B cell (primary cell): ENCODE measurements at regions of chr2 and their contacts with region 1.

Region 1: GRCh38 chr2:218852911-218853667 is 6.5 kb upstream of the WNT6 start:
- DNase-seq: peak; percentile 81
- ATAC-seq: peak; percentile 87
- H3K4me3 ChIP-seq: no peak overlapping the region
- H3K4me3 Mint-ChIP-seq: no peak overlapping the region
- H3K27ac ChIP-seq: no peak overlapping the region
- H3K27ac Mint-ChIP-seq: no peak overlapping the region
- H3K4me1 ChIP-seq: peaks cover 3% of the 10 kb centered on the region in 2 donors
- H3K4me1 Mint-ChIP-seq: no peaks in the 10 kb centered on the region
- H3K27me3 ChIP-seq: peaks cover 0 to 72% (median 27%) of the 10 kb centered on the region in 4 experiments
- H3K27me3 Mint-ChIP-seq: peaks cover 61% of the 10 kb centered on the region
- CTCF ChIP-seq: peak; percentile 82

Region 2: GRCh38 chr2:218301176-218301819 is 551.8 kb before region 1 on chr2:
- CTCF ChIA-PET with region 1: no interaction called
- POLR2A ChIA-PET with region 1: no interaction called
- intact Hi-C with region 1: loop called (anchors 5 kb)
- DNase-seq: peak; percentile 90
- ATAC-seq: peak; percentile 94
- H3K4me3 ChIP-seq: no peak overlapping the region
- H3K4me3 Mint-ChIP-seq: no peak overlapping the region
- H3K27ac ChIP-seq: no peak overlapping the region
- H3K27ac Mint-ChIP-seq: no peak overlapping the region
- H3K4me1 ChIP-seq: peaks cover 3 to 6% of the 10 kb centered on the region in 2 donors
- H3K4me1 Mint-ChIP-seq: peaks cover 7% of the 10 kb centered on the region
- H3K27me3 ChIP-seq: no peaks in the 10 kb centered on the region
- H3K27me3 Mint-ChIP-seq: no peaks in the 10 kb centered on the region
- CTCF ChIP-seq: peak; percentile 90

Region 3: DNA sequence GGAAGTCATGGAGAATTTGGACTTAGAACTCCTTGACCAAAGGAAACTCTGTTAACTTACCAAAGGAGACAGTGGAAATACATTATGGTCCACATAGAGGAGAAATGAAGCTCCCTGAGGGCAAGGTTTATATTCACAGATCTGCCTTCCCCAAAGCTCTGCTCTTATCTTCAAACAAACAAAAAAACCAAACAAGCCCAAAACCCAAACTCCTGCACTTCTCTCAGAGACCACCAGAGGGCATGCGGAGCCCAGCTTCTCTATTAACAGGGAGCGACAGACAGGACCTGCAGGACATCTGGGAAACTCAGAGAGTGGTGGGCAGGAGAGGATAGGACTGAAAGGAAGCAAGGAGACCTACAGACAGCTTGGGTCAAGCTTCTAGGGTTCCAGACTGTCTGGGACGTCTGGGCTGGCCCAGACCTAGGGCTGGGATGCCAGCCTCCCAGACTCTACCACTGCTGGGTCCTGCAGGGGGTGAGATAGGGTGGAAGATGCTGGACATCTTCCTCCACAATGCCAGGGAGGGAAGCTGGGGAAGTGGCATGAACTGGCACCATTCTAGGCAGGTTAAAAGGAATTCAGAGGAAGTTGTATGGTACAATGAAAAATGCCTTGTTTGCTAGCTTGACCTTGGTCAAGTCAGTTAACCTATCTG is 23.6 kb after region 1 on chr2:
- CTCF ChIA-PET with region 1: interaction called, 129 read pairs
- POLR2A ChIA-PET with region 1: no interaction called
- intact Hi-C with region 1: loop called (anchors 1 kb)
- DNase-seq: peak; percentile 87
- ATAC-seq: no peak
- H3K4me3 ChIP-seq: no peak overlapping the region
- H3K4me3 Mint-ChIP-seq: peak overlapping the region; percentile 2
- H3K27ac ChIP-seq: no peak overlapping the region
- H3K27ac Mint-ChIP-seq: peak overlapping the region; percentile 23
- H3K4me1 ChIP-seq: peaks cover 54 to 70% of the 10 kb centered on the region in 2 donors
- H3K4me1 Mint-ChIP-seq: peaks cover 59% of the 10 kb centered on the region
- H3K27me3 ChIP-seq: peaks cover 0 to 40% (median 17%) of the 10 kb centered on the region in 4 experiments
- H3K27me3 Mint-ChIP-seq: peaks cover 19% of the 10 kb centered on the region
- CTCF ChIP-seq: peak; percentile 94

Region 4: GRCh38 chr2:218979846-218980734 is 127.0 kb after region 1 on chr2:
- CTCF ChIA-PET with region 1: interaction called, 21 read pairs
- POLR2A ChIA-PET with region 1: no interaction called
- intact Hi-C with region 1: loop called (anchors 5 kb)
- DNase-seq: peak; percentile 91
- ATAC-seq: peak; percentile 85
- H3K4me3 ChIP-seq: peak overlapping the region in 4 of 5 experiments; percentile 3 to 45 (median 26)
- H3K4me3 Mint-ChIP-seq: peak overlapping the region; percentile 85
- H3K27ac ChIP-seq: no peak overlapping the region
- H3K27ac Mint-ChIP-seq: peak overlapping the region; percentile 63
- H3K4me1 ChIP-seq: peaks cover 37 to 51% of the 10 kb centered on the region in 2 donors
- H3K4me1 Mint-ChIP-seq: peaks cover 28% of the 10 kb centered on the region
- H3K27me3 ChIP-seq: peaks cover 0 to 79% (median 55%) of the 10 kb centered on the region in 4 experiments
- H3K27me3 Mint-ChIP-seq: peaks cover 65% of the 10 kb centered on the region
- CTCF ChIP-seq: peak; percentile 87

Region 5: GRCh38 chr2:219155054-219155644 is 302.1 kb after region 1 on chr2:
- CTCF ChIA-PET with region 1: interaction called, 11 read pairs
- POLR2A ChIA-PET with region 1: no interaction called
- intact Hi-C with region 1: no loop called
- DNase-seq: peak; percentile 74
- ATAC-seq: no peak
- H3K4me3 ChIP-seq: no peak overlapping the region
- H3K4me3 Mint-ChIP-seq: no peak overlapping the region
- H3K27ac ChIP-seq: no peak overlapping the region
- H3K27ac Mint-ChIP-seq: no peak overlapping the region
- H3K4me1 ChIP-seq: peaks cover 5 to 9% of the 10 kb centered on the region in 2 donors
- H3K4me1 Mint-ChIP-seq: peaks cover 9% of the 10 kb centered on the region
- H3K27me3 ChIP-seq: no peaks in the 10 kb centered on the region
- H3K27me3 Mint-ChIP-seq: no peaks in the 10 kb centered on the region
- CTCF ChIP-seq: peak; percentile 87